CD4-positive, alpha-beta T cell (primary cell): ENCODE measurements at regions of chr17 and their contacts with region 1.

Region 1: DNA sequence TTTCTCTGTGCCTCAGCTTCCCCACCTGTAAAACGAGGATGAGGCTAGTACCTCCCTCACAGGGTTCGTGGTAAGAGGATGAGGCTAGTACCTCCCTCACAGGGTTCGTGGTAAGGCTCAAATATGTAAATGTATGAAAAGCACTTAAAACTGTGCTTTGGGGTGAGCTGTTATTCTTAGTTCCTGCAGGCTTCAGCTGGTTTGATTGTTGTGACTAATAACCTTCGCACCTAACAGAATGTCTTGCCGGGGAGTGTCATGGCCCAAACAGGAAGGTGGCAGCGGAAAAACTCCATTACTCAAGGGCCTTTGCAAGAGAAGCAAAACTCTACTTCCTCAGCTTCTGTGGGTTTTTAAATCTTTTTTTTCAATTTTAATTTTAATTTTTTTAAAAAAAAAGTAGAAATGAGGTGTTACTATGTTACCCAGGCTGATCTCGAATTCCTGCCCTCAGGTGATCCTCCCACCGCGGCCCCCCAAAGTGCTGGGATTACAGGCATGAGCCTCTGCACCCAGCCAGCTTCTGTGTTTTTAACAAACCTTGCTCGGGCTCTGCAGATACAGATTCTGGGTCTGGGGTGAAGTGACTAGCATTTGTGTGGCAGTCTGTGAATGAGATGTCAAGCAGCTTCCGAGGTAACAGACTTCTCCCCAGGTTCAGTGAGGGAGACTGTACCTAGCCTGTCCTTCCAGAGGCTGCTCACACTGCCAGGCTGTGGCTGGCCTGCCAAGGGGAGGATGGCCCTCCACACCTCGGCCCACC is 103.0 kb downstream of the RAB11FIP4 start:
- DNase-seq: peak in 13 of 14 experiments; percentile 45 to 90 (median 59)
- ATAC-seq: peak; percentile 85
- H3K4me3 ChIP-seq: peak overlapping the region; percentile 19
- H3K4me3 Mint-ChIP-seq: peak overlapping the region; percentile 96
- H3K27ac ChIP-seq: peak overlapping the region; percentile 81 to 90
- H3K27ac Mint-ChIP-seq: peak overlapping the region; percentile 96
- H3K4me1 ChIP-seq: peaks cover 92% of the 10 kb centered on the region
- H3K4me1 Mint-ChIP-seq: peaks cover 85% of the 10 kb centered on the region
- H3K27me3 ChIP-seq: no peaks in the 10 kb centered on the region
- H3K27me3 Mint-ChIP-seq: no peaks in the 10 kb centered on the region
- CTCF ChIP-seq: no peak

Region 2: GRCh38 chr17:31549525-31550388 is 55.3 kb after region 1 on chr17:
- CTCF ChIA-PET with region 1: no interaction called
- POLR2A ChIA-PET with region 1: interaction called, 3 read pairs
- intact Hi-C with region 1: loop called in 1 of 2 experiments (anchors 2 kb)
- DNase-seq: peak; percentile 78 to 93 (median 87)
- ATAC-seq: peak; percentile 87
- H3K4me3 ChIP-seq: peak overlapping the region; percentile 74
- H3K4me3 Mint-ChIP-seq: peak overlapping the region; percentile 96
- H3K27ac ChIP-seq: peak overlapping the region in 1 of 2 donors; percentile 56
- H3K27ac Mint-ChIP-seq: peak overlapping the region; percentile 76
- H3K4me1 ChIP-seq: peaks cover 15% of the 10 kb centered on the region
- H3K4me1 Mint-ChIP-seq: peaks cover 23% of the 10 kb centered on the region
- H3K27me3 ChIP-seq: no peaks in the 10 kb centered on the region
- H3K27me3 Mint-ChIP-seq: no peaks in the 10 kb centered on the region
- CTCF ChIP-seq: no peak